ENCODE measurements at regions of chr19 and their contacts with region 1.

Region 1: DNA sequence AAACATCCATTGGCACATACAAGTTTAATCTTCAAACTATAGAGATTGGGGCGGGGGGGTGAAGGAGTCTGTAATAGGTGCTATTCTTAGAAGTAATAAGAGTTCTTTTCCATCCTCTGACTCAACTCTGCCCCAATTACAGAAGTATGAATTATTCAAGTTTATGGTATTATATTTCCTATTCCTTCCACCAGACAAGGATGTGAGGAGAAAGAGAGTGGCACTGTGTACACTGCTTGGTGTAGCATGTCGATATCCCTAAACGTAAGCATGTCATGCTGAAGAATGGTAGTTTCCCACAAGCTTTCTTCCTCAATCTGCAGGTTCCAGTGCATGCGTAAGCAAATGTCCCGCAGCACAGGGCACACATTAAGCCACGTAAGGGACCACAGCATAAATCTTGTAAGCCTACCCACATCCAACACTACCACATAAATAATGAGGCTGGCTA is 14.1 kb downstream of the BRD4 start:
- DNase-seq: no peak
- H3K4me3 ChIP-seq: no peak overlapping the region
- H3K27ac ChIP-seq: peak overlapping the region; percentile 21
- H3K27me3 ChIP-seq: no peaks in the 10 kb centered on the region
- CTCF ChIP-seq: no peak

Region 2: DNA sequence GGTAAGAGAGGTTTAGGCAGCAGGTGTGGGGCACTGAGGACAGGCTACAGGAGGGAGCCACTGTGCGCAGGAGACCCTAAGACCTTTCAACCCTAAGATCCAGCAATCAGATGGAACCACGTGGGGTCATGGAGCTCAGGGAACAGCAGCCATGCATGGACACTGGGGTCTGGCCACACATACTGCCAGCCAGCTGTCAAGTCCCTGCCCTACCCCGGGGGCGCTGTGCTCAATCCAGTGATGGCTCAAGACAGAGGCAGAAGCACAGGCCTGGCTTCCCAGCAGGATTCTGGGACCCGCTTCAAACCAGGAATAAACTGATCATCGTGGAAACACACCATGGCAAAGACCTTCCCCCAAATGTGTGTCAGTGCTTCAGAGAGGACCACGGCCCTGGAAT is 60.5 kb before region 1 on chr19:
- CTCF ChIA-PET with region 1: no interaction called
- POLR2A ChIA-PET with region 1: no interaction called
- DNase-seq: no peak
- H3K4me3 ChIP-seq: no peak overlapping the region
- H3K27ac ChIP-seq: no peak overlapping the region
- H3K27me3 ChIP-seq: no peaks in the 10 kb centered on the region
- CTCF ChIP-seq: no peak

Region 3: GRCh38 chr19:15304140-15304705 is 14.0 kb before region 1 on chr19:
- CTCF ChIA-PET with region 1: interaction called, 5 read pairs
- POLR2A ChIA-PET with region 1: interaction called, 19 read pairs
- DNase-seq: no peak
- H3K4me3 ChIP-seq: no peak overlapping the region
- H3K27ac ChIP-seq: no peak overlapping the region
- H3K27me3 ChIP-seq: no peaks in the 10 kb centered on the region
- CTCF ChIP-seq: no peak

Measured in AG04450 (cell line).